Right lobe of liver (tissue), 6 donors: ENCODE measurements at regions of chr4 and their contacts with region 1.

Region 1: DNA sequence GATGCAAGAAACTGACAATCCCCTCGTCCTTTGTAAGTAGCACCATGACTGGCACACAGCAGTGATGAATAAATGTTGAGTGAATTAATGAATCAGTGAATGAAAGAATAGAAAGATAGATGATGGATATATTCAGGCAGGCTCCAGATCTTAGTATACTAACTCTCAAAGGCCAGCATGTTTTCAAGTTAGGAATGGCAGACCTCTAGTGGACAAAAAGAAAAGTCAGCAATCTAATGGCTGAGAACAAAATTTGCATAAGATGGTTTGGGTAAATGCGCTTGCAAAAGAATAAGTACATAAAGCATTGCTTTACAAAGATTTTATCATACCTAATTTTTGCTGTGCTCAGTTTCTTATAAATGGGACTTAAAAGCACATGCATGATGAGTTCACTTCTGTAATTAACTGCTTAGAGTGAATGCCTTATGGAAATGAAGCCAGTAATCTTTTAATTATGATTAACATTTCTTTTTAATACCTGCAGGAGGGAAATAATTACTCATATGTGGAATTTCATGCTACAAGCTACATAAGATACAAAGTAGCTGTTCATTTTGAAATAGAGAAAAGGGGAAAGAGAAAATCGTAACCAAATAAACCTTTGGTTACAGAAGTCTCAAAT is 126.9 kb upstream of the GPRIN3 start:
- DNase-seq: no peak
- ATAC-seq: peak; percentile 71 to 89 (median 84)
- H3K4me3 ChIP-seq: no peak overlapping the region
- H3K27ac ChIP-seq: no peak overlapping the region
- H3K4me1 ChIP-seq: no peaks in the 10 kb centered on the region
- H3K27me3 ChIP-seq: no peaks in the 10 kb centered on the region
- CTCF ChIP-seq: peak; percentile 66 to 92 (median 77)
- POLR2A ChIP-seq: no peak

Region 2: DNA sequence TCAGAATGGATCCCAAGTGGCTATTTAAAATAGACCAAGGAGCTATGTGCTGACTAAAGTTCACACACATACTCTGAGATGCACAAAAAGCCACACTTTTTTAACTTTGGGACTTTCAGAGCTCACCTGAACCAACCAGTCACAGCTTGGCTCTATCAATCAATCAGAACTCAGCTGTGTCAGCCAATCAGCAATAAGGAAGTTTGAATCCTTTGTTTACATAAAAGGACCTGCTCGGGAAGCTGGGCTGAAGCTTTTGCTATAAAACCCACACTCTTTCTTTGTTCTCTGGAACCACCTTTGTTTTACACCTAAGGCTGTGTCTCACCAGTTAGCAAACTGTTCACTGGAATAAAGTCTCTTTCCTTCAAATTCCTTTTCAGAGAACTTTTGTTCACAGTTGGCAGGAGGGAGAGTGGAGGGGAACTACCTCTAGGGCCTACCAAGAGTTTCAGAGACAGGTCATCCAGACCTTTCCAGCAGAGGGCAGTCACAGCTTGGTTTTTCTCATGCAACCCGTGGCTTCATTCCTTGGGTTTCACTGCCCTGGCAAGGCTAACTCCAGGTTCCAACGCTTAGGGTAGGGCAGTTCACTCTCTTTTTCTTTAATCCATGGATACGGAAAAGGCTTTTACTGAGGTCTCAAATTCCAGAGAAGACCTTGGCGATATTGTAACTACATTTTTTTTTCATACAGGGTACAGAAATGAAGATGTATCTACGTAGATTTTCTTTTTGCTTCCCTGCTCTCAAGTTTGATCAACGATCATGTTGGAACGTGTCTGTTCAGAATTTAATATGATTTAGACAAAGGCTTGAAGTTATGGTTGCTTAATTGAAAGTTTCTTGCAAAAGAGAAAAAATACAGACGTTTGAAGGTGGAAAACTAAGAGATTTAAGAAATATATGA is 207.6 kb before region 1 on chr4:
- intact Hi-C with region 1: loop called in 1 of 2 experiments (anchors 10 kb)
- DNase-seq: peak; percentile 69 to 82 (median 71)
- ATAC-seq: peak; percentile 100
- H3K4me3 ChIP-seq: no peak overlapping the region
- H3K27ac ChIP-seq: no peak overlapping the region
- H3K4me1 ChIP-seq: no peaks in the 10 kb centered on the region
- H3K27me3 ChIP-seq: no peaks in the 10 kb centered on the region
- CTCF ChIP-seq: peak; percentile 77 to 89 (median 82)
- POLR2A ChIP-seq: no peak

Region 3: DNA sequence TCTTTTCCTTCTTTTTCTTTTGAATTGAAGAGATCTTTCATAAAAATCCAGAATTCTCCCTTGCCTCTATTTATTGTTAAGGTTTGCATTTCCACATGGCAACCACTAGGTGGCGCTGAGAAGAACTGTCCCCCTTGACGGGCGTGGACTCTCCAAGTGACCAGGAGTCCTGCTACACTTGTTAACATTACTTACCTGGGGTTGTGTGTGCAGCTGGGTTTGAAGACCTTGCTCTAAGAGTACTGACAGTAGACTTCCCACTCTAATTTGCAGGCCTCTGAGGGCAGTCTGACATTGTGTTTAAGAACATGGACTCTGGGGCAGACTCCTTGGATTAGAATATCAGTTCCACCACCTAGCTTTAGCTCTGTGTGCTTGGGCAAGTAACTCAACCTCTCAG is 179.6 kb before region 1 on chr4:
- intact Hi-C with region 1: loop called in 1 of 2 experiments (anchors 10 kb)
- DNase-seq: peak in 1 of 3 donors; percentile 49
- ATAC-seq: peak; percentile 86 to 93 (median 88)
- H3K4me3 ChIP-seq: no peak overlapping the region
- H3K27ac ChIP-seq: no peak overlapping the region
- H3K4me1 ChIP-seq: peaks cover 0 to 6% (median 0%) of the 10 kb centered on the region in 4 donors
- H3K27me3 ChIP-seq: no peaks in the 10 kb centered on the region
- CTCF ChIP-seq: peak; percentile 71 to 88 (median 84)
- POLR2A ChIP-seq: no peak